CD8-positive, alpha-beta T cell (primary cell): ENCODE measurements at regions of chr7 and their contacts with region 1.

Region 1: DNA sequence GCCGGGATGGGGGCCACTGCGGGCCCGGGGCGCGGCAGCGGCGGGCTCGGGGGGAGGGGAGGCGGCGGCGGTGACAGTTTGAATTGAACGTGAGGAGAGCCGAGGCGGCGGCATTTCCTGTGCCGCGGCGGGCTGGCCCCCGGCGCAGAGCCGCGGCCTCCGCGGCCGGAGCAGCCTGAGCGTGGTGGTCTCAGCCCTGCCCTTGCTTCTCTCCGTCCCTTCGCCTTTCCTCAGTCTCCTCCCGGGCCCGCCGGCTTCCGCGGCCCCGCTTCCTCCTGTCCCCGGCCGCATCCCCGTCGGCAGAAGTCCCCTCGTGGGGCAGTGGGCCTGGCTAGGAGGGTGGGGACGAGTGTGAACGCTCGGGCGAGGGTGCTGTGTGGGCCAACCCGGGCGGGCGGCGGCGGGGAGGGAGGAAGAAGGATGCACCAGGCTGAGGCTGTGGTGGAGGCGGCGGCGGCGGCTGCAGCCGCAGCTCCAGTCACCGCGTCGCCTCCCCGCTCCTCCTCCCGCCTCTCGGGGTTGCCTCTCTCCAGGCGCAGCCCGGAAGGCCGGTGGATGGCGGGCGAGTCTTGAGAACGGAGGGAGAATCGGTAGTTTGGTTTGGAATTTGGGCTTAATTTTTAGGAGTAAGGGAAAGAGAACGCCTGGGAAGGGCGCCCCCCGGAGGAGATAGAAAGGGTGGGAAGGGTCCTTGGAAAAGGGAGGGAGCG is 690 bp downstream of the SEPTIN7 start:
- DNase-seq: peak; percentile 63 to 90 (median 79)
- ATAC-seq: peak; percentile 27
- H3K4me3 ChIP-seq: peak overlapping the region; percentile 58 to 84
- H3K4me3 Mint-ChIP-seq: peak overlapping the region; percentile 91
- H3K27ac ChIP-seq: peak overlapping the region; percentile 98
- H3K27ac Mint-ChIP-seq: peak overlapping the region; percentile 98
- H3K4me1 ChIP-seq: peaks cover 49% of the 10 kb centered on the region
- H3K4me1 Mint-ChIP-seq: peaks cover 48% of the 10 kb centered on the region
- H3K27me3 ChIP-seq: no peaks in the 10 kb centered on the region
- H3K27me3 Mint-ChIP-seq: no peaks in the 10 kb centered on the region
- CTCF ChIP-seq: peak; percentile 26

Region 2: GRCh38 chr7:35605760-35606159 is 195.8 kb before region 1 on chr7:
- CTCF ChIA-PET with region 1: no interaction called
- POLR2A ChIA-PET with region 1: no interaction called
- intact Hi-C with region 1: no loop called
- DNase-seq: no peak
- ATAC-seq: no peak
- H3K4me3 ChIP-seq: no peak overlapping the region
- H3K4me3 Mint-ChIP-seq: no peak overlapping the region
- H3K27ac ChIP-seq: no peak overlapping the region
- H3K27ac Mint-ChIP-seq: no peak overlapping the region
- H3K4me1 ChIP-seq: no peaks in the 10 kb centered on the region
- H3K4me1 Mint-ChIP-seq: no peaks in the 10 kb centered on the region
- H3K27me3 ChIP-seq: no peaks in the 10 kb centered on the region
- H3K27me3 Mint-ChIP-seq: no peaks in the 10 kb centered on the region
- CTCF ChIP-seq: no peak

Region 3: DNA sequence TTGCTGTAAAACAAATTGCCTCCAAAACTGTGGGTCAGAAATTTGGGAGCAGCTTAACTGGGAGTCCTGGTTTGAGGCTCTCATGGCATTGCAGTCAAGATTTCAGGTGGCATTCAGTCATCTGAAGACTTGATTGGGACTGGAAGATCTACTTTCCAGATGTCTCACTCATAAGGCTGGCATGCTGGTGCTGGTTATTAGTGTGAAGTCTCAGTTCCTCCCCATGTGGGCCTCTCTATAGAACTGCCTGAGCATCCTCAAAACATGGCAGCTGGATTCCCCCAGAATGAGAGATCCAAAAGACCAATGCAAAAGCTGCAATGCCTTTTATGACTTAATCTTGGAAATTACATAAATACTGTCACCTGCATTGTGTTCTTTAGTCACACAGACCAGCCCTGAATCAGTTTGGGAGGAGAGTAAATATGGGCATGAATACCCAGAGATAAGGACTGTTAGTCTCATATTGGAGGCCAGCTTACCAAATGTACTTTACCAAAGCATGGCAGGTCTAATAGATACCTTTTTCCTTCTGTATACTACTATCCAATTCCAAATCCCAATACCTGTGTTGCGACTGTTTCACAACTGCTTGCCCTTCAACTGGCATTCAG is 100.2 kb before region 1 on chr7:
- CTCF ChIA-PET with region 1: no interaction called
- POLR2A ChIA-PET with region 1: interaction called, 80 read pairs
- intact Hi-C with region 1: loop called in 1 of 2 experiments (anchors 1 kb)
- DNase-seq: no peak
- ATAC-seq: no peak
- H3K4me3 ChIP-seq: no peak overlapping the region
- H3K4me3 Mint-ChIP-seq: no peak overlapping the region
- H3K27ac ChIP-seq: no peak overlapping the region
- H3K27ac Mint-ChIP-seq: no peak overlapping the region
- H3K4me1 ChIP-seq: peaks cover 2% of the 10 kb centered on the region
- H3K4me1 Mint-ChIP-seq: peaks cover 16% of the 10 kb centered on the region
- H3K27me3 ChIP-seq: no peaks in the 10 kb centered on the region
- H3K27me3 Mint-ChIP-seq: no peaks in the 10 kb centered on the region
- CTCF ChIP-seq: no peak

Region 4: DNA sequence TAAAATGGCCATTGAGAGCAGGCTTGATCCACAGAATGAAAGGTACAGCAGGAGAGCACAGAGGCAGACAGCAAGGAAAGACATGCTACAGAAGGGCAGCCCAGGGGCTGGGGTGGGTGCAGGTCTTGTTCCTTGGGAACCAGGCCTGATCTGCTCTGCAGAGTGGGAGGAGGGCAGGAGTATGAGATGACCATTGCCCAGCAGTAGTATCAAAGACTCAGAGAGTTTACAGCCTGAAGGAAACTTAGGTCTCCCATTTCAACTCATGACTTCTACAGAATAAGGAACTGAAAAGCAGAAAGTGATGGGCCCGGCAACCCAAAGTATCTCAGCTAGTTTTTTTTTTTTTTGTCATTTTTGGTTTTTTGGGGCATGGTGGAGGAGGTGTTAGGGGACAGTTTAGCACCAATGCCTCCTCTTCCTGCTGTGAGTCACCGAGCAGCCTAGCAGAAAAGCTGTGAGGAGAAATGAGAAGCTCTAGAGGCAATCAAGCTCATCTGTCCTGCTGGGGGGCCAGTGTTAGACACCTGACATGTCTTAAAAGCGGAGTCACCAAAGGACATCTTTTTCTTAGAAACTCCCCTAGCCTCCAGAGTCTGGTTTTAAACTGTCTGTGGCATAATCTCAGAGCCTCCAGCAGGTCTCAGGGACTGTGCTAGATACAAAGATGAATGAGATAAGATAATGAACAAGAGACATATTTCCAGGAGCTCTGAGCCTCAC is 72.3 kb before region 1 on chr7:
- CTCF ChIA-PET with region 1: interaction called, 6 read pairs
- POLR2A ChIA-PET with region 1: interaction called, 71 read pairs
- intact Hi-C with region 1: loop called (anchors 1 kb)
- DNase-seq: peak in 7 of 9 experiments; percentile 26 to 91 (median 52)
- ATAC-seq: peak; percentile 65
- H3K4me3 ChIP-seq: peak overlapping the region in 1 of 2 experiments; percentile 18
- H3K4me3 Mint-ChIP-seq: peak overlapping the region; percentile 26
- H3K27ac ChIP-seq: peak overlapping the region; percentile 22 to 77
- H3K27ac Mint-ChIP-seq: peak overlapping the region; percentile 78
- H3K4me1 ChIP-seq: peaks cover 56% of the 10 kb centered on the region
- H3K4me1 Mint-ChIP-seq: peaks cover 61% of the 10 kb centered on the region
- H3K27me3 ChIP-seq: no peaks in the 10 kb centered on the region
- H3K27me3 Mint-ChIP-seq: no peaks in the 10 kb centered on the region
- CTCF ChIP-seq: no peak

Region 5: DNA sequence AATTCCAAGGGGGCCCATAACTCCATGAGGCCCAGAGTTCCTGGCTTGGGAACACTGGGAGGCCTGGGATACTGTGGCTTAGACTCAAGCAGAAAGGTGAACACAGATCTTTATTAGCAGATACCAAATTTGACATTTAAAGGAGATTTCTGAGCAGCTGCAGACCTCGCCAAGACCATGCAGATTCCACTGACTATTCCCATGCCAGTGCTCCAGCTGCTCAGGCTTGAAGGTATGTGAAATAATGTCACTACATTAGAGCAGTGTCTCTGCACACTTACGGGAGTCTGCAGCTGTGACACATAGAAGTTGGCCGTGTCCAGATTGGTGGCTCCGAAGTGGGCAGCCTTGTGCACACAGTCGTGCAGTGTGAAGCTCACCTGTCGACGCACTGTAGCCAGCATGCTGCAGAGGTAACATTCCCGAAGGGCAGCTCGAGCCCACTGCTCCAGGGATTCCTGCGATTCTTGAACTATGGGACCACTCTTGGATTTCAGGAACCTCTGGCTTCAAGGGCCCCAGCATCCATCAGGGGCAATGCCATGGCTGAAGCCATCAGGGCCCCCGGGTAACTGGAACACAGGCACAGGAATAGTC is 45.4 kb after region 1 on chr7:
- CTCF ChIA-PET with region 1: no interaction called
- POLR2A ChIA-PET with region 1: interaction called, 13 read pairs
- intact Hi-C with region 1: loop called in 1 of 2 experiments (anchors 5 kb)
- DNase-seq: no peak
- ATAC-seq: no peak
- H3K4me3 ChIP-seq: no peak overlapping the region
- H3K4me3 Mint-ChIP-seq: no peak overlapping the region
- H3K27ac ChIP-seq: no peak overlapping the region
- H3K27ac Mint-ChIP-seq: peak overlapping the region; percentile 46
- H3K4me1 ChIP-seq: peaks cover 20% of the 10 kb centered on the region
- H3K4me1 Mint-ChIP-seq: peaks cover 67% of the 10 kb centered on the region
- H3K27me3 ChIP-seq: no peaks in the 10 kb centered on the region
- H3K27me3 Mint-ChIP-seq: no peaks in the 10 kb centered on the region
- CTCF ChIP-seq: no peak

Region 6: GRCh38 chr7:35985126-35985754 is 183.7 kb after region 1 on chr7:
- CTCF ChIA-PET with region 1: no interaction called
- POLR2A ChIA-PET with region 1: no interaction called
- intact Hi-C with region 1: no loop called
- DNase-seq: peak; percentile 63 to 86 (median 78)
- ATAC-seq: peak; percentile 100
- H3K4me3 ChIP-seq: no peak overlapping the region
- H3K4me3 Mint-ChIP-seq: no peak overlapping the region
- H3K27ac ChIP-seq: no peak overlapping the region
- H3K27ac Mint-ChIP-seq: no peak overlapping the region
- H3K4me1 ChIP-seq: no peaks in the 10 kb centered on the region
- H3K4me1 Mint-ChIP-seq: no peaks in the 10 kb centered on the region
- H3K27me3 ChIP-seq: no peaks in the 10 kb centered on the region
- H3K27me3 Mint-ChIP-seq: no peaks in the 10 kb centered on the region
- CTCF ChIP-seq: peak; percentile 82

Region 7: DNA sequence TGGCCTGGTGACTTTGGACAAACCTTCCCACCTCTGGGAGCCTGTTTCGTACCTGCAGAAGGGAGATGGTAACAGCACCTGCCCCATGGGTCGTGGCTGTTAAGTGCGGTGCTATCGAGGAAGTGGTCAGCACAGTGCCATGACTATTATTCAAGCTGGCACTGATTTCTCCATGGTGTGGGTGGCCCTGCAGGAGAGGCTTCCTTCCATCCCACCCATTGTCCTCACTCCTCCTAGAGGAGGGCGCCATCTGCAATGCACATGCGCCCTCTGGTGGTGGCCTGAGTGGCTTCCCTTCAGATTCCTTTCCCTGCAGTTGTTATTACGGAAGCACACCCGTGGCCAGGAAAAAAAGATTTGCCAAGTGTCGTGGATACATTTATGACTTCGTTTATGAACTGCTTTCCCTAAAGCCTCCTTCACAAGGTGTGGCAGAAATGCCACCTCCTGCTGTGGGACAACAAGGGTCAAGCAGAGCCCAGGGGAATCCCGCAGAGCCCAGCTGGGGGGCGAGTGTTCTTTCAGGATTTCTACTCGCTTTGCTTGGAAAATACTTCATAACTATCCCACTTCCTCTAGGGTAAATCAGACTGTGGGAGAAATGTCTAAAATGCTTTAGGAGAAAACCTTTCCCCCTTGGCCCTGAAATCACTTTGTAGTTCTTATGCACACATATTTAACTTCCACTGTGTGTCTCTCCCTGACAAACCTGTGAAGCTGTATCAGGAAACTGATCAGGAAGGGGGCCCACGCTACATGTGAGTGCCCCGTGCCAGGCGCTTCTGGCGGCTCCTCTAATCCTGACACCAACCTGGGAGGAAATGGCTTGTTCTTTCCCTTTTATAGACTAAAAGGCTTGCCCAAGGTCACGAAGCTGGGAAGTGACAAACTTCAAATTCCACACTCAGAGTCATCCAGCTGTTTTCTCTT is 490.1 kb after region 1 on chr7:
- CTCF ChIA-PET with region 1: no interaction called
- POLR2A ChIA-PET with region 1: no interaction called
- intact Hi-C with region 1: loop called in 1 of 2 experiments (anchors 2 kb)
- DNase-seq: peak; percentile 41 to 88 (median 78)
- ATAC-seq: peak; percentile 54
- H3K4me3 ChIP-seq: peak overlapping the region; percentile 18 to 27
- H3K4me3 Mint-ChIP-seq: peak overlapping the region; percentile 54
- H3K27ac ChIP-seq: no peak overlapping the region
- H3K27ac Mint-ChIP-seq: no peak overlapping the region
- H3K4me1 ChIP-seq: peaks cover 25% of the 10 kb centered on the region
- H3K4me1 Mint-ChIP-seq: peaks cover 34% of the 10 kb centered on the region
- H3K27me3 ChIP-seq: no peaks in the 10 kb centered on the region
- H3K27me3 Mint-ChIP-seq: no peaks in the 10 kb centered on the region
- CTCF ChIP-seq: peak; percentile 93